Common myeloid progenitor, CD34-positive (primary cell): ENCODE measurements at regions of chr15 and their contacts with region 1.

Region 1: GRCh38 chr15:40098489-40099261 is 10.0 kb downstream of the BMF start:
- DNase-seq: peak; percentile 85 to 96 (median 94)
- H3K4me3 ChIP-seq: peak overlapping the region in 4 of 7 experiments; percentile 5 to 57 (median 22)
- H3K27ac ChIP-seq: peak overlapping the region; percentile 93 to 97
- H3K4me1 ChIP-seq: peaks cover 16 to 97% (median 80%) of the 10 kb centered on the region in 4 experiments
- H3K27me3 ChIP-seq: no peaks in the 10 kb centered on the region

Region 2: DNA sequence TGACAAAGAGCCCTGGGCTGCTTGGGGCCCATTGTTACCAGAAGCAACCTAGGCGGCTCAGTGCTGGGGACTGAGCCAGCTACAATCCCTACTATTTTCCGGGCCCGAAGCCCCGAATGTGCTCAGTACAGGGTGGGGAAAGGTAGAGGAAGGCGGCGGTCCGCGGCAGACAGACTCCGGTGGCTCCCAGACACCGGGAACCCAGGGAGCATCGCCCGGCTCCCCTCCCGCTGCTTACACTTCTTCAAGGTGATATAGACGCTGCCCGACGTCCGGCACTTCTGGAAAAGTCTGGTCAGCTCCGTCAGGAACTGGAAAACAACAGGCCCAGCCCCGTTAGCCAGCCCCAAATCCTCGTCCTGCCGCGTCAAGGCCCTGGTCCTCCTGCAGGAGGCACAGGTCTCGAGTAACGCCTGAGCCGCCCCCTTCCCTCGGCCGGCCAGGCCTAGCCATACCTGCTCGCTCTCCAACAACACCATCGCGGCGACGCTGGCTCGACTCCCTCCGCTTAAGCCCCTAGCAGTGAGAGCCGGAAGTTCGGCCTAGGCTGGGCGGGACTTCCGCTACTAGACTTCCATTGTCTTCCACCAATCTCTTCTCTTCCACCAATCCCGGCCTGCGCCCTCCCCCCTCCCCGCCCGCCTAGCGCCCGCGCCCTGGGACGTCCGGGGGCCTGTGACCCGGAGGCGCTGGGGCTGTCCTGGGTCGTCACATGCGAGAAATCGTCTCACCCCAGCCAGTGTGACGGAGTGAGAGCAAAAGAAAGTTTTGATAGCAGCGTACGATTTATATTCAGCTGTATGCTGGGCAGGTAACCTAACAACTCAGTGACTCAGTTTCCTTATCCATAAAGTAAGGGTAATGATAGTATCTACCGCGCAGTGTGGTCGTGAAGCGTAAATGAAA is 59.8 kb before region 1 on chr15 and contains the start of gene SRP14:
- CTCF ChIA-PET with region 1: interaction called, 224 read pairs
- POLR2A ChIA-PET with region 1: interaction called, 10 read pairs
- DNase-seq: peak; percentile 95 to 97 (median 96)
- H3K4me3 ChIP-seq: peak within 1 kb of the TSS; percentile 59 to 97 (median 94)
- H3K27ac ChIP-seq: peak within 1 kb of the TSS; percentile 92 to 96
- H3K4me1 ChIP-seq: peaks cover 7 to 24% (median 17%) of the 10 kb centered on the region in 4 experiments
- H3K27me3 ChIP-seq: no peaks in the 10 kb centered on the region

Region 3: DNA sequence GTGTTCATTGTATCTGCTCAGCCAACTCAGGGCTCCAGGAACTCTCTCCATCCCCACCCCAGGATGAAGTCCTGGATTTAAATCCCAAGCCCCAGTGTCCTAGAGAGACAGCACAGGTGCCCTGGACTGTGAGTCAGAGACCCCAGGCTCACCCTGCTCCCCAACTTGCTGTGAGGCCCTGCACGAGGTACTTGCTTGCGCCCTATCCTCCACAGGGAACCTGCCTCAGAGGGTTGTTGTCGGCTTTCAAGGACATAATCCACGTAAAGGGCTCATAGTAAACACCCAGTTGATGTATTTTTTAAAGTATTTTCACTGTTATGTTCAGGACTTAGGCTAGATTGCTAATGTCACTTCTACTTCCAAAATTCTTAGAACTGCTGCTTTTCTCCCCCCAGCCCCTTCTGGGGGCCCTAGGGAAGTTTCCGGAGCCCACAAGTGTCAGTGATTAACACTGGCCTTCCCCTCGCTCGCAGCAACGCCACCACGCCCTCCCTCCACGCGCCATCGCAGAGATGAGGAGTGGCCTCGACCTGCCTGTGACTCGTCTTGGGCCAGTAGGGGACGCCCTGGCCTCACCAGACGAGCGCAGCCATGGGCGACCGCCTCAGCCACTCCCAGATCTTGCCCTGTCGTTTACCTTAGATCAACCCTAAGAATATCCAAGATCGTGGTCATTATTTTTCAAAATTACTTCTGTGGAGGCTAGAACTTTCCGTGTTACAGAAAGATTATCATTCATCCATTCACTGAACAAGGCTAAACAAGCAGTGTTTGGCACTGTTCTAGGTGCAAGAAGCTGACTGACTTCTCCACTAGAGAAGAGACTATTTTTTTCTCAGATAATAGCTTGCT is 53.7 kb before region 1 on chr15:
- CTCF ChIA-PET with region 1: interaction called, 224 read pairs
- POLR2A ChIA-PET with region 1: interaction called, 13 read pairs
- DNase-seq: peak; percentile 84 to 88 (median 84)
- H3K4me3 ChIP-seq: peak overlapping the region in 4 of 7 experiments; percentile 37 to 65 (median 46)
- H3K27ac ChIP-seq: peak overlapping the region in 1 of 2 experiments; percentile 59
- H3K4me1 ChIP-seq: peaks cover 13 to 62% (median 55%) of the 10 kb centered on the region in 4 experiments
- H3K27me3 ChIP-seq: no peaks in the 10 kb centered on the region

Region 4: DNA sequence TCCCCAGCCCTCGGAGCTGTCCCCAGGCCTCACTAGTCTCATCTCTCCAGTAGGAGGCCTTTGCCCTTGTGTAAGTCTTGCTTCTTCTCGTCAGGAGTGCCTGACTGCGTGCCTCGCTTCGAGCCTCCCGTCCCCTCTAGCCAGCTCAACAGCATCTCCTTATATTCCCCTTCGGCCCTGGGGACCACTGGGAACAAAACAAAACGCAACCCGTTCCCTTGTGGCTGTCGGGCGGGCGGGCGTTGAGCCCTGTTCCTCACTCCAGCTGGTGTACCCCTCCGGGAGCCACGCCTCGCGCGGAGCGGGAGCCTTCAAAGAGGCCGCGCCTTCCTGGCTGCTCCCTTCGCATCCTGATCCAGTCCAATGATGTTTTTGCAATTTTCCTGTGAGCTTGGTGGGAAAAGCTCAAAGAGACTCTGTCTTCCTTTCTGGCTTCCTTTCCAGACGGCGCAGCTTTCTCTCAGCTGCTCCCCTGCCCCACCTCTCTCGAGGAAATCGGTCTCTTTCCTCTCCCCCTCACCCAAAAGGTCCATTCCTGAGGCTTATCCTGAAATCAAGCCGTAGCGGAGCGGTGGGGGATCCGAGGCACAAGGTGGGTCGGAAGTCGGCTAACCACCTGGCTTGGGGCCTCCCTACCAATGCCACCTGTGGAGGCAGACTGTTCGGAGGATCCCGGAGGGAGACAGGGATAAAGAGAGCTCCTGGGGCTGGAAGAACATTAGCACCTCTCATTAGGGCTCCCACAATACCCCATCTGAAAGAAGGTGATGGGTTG is 26.3 kb before region 1 on chr15:
- CTCF ChIA-PET with region 1: interaction called, 19 read pairs
- POLR2A ChIA-PET with region 1: interaction called, 3 read pairs
- DNase-seq: no peak
- H3K4me3 ChIP-seq: peak overlapping the region in 1 of 7 experiments; percentile 1
- H3K27ac ChIP-seq: no peak overlapping the region
- H3K4me1 ChIP-seq: peaks cover 0 to 30% (median 23%) of the 10 kb centered on the region in 4 experiments
- H3K27me3 ChIP-seq: no peaks in the 10 kb centered on the region

Region 5: DNA sequence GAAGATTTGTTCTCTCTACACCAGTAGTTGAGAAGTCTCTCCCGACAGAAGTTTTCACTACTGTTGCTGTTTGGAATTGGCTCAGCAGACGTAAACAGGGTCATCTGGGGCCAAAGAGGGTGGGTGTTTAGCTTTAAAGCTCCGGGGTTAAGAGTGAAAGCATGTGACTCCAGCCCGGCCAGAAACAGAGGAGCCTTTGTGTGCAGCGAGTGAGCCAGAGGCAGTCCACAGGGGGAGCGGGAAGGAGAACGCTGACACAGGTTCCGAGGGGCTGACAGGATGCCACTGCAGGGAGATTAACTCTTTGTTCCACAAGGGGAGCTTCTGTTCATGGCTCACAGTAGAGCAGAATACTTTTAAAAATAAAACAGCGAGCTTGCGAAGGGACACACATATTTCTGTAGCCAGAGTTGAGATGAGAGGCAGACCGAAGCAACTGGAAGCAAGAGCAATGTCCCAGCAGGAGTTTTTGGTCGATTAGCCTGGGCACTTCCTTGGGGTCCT is 16.9 kb before region 1 on chr15:
- CTCF ChIA-PET with region 1: interaction called, 117 read pairs
- POLR2A ChIA-PET with region 1: interaction called, 8 read pairs
- DNase-seq: peak; percentile 58 to 73 (median 61)
- H3K4me3 ChIP-seq: peak overlapping the region in 6 of 7 experiments; percentile 14 to 70 (median 50)
- H3K27ac ChIP-seq: peak overlapping the region; percentile 42 to 79
- H3K4me1 ChIP-seq: peaks cover 7 to 42% (median 24%) of the 10 kb centered on the region in 4 experiments
- H3K27me3 ChIP-seq: no peaks in the 10 kb centered on the region

Region 6: GRCh38 chr15:40115670-40116093 is 17.0 kb after region 1 on chr15:
- CTCF ChIA-PET with region 1: interaction called, 50 read pairs
- POLR2A ChIA-PET with region 1: interaction called, 14 read pairs
- DNase-seq: peak; percentile 64 to 90 (median 88)
- H3K4me3 ChIP-seq: no peak overlapping the region
- H3K27ac ChIP-seq: no peak overlapping the region
- H3K4me1 ChIP-seq: peaks cover 0 to 32% (median 12%) of the 10 kb centered on the region in 4 experiments
- H3K27me3 ChIP-seq: no peaks in the 10 kb centered on the region